Heart right ventricle (tissue), 16 donors: ENCODE measurements at regions of chr4 and their contacts with region 1.

Region 1: DNA sequence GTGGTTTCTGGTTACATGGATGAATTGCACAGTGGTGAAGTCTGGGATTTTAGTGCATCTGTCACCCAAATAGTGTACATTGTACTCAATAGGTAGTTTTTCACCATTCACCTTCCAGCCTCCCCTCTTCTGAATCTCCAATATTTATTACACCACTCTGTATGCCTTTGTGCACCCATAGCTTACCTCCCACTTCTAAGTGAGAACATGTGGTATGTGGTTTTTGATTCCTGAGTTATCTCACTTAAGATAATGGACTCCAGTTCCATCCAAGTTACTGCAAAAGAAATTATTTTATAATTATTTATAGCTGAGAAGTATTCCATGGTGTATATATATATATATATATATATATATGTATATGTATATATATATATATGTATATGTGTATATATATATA is 155.8 kb downstream of the HHIP start:
- DNase-seq: no peak
- ATAC-seq: no peak
- H3K4me3 ChIP-seq: no peak overlapping the region
- H3K27ac ChIP-seq: no peak overlapping the region
- H3K4me1 ChIP-seq: no peaks in the 10 kb centered on the region
- H3K27me3 ChIP-seq: no peaks in the 10 kb centered on the region
- CTCF ChIP-seq: no peak

Region 2: GRCh38 chr4:144421056-144421455 is 380.7 kb before region 1 on chr4:
- intact Hi-C with region 1: no loop called
- DNase-seq: no peak
- ATAC-seq: no peak
- H3K4me3 ChIP-seq: no peak overlapping the region
- H3K27ac ChIP-seq: no peak overlapping the region
- H3K4me1 ChIP-seq: no peaks in the 10 kb centered on the region
- H3K27me3 ChIP-seq: no peaks in the 10 kb centered on the region
- CTCF ChIP-seq: no peak

Region 3: GRCh38 chr4:144778364-144778763 is 23.4 kb before region 1 on chr4:
- intact Hi-C with region 1: loop called in 1 of 10 experiments (anchors 1 kb)
- DNase-seq: no peak
- ATAC-seq: no peak
- H3K4me3 ChIP-seq: no peak overlapping the region
- H3K27ac ChIP-seq: no peak overlapping the region
- H3K4me1 ChIP-seq: no peaks in the 10 kb centered on the region
- H3K27me3 ChIP-seq: no peaks in the 10 kb centered on the region
- CTCF ChIP-seq: no peak